ENCODE measurements at regions of chr2 and their contacts with region 1.

Region 1: DNA sequence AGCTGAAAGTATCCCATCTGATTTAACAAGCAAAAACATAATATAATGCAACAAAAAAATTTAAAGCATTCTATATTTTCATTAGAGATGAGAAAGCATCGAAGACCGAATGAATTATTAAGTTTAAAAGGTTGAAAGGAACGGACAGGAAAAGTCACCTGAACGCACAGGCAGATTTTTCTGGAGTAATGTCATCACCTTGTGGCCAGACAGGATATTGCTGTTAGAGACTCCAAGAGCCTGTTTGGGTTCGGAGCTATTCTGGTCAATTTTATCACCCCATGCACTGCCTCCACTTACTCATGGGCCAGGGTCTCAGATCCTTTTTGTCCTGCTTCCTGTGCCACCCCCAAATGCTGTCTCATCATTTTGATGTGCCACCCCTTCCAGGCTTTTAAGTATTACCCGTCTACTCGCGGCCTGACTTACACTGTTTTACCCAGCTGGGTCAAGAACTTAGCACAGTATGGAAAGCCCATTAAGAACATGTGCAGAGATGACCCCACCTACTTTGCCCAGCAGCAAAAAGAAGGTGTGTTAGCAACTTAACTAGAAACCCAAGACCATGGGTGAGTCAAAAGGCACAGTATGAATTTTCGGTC is 27.3 kb downstream of the GKN2 start:
- DNase-seq: peak; percentile 40 to 67 (median 56)
- ATAC-seq: peak; percentile 77
- H3K4me3 ChIP-seq: no peak overlapping the region
- H3K27ac ChIP-seq: no peak overlapping the region
- H3K4me1 ChIP-seq: peaks cover 7% of the 10 kb centered on the region
- H3K27me3 ChIP-seq: no peaks in the 10 kb centered on the region
- CTCF ChIP-seq: peak; percentile 79 to 96 (median 91)
- POLR2A ChIP-seq: no peak

Region 2: GRCh38 chr2:67782443-67782842 is 1143.0 kb before region 1 on chr2:
- intact Hi-C with region 1: no loop called
- DNase-seq: peak in 1 of 4 donors; percentile 42
- ATAC-seq: peak; percentile 59
- H3K4me3 ChIP-seq: no peak overlapping the region
- H3K27ac ChIP-seq: no peak overlapping the region
- H3K4me1 ChIP-seq: no peaks in the 10 kb centered on the region
- H3K27me3 ChIP-seq: no peaks in the 10 kb centered on the region
- CTCF ChIP-seq: no peak
- POLR2A ChIP-seq: no peak

Region 3: GRCh38 chr2:68467077-68467960 is 458.1 kb before region 1 on chr2 and contains the starts of genes APLF and FBXO48:
- intact Hi-C with region 1: loop called (anchors 10 kb)
- DNase-seq: peak; percentile 98 to 99 (median 98)
- ATAC-seq: peak; percentile 97
- H3K4me3 ChIP-seq: peak within 1 kb of the TSS; percentile 74 to 90
- H3K27ac ChIP-seq: peak within 1 kb of the TSS; percentile 64 to 89 (median 84)
- H3K4me1 ChIP-seq: peaks cover 16% of the 10 kb centered on the region
- H3K27me3 ChIP-seq: no peaks in the 10 kb centered on the region
- CTCF ChIP-seq: no peak
- POLR2A ChIP-seq: peak; percentile 68 to 84 (median 79)
- total RNA-seq, gene APLF: 3.9 to 4.0 TPM
- total RNA-seq, gene FBXO48: 0.78 to 3.0 TPM

Region 4: GRCh38 chr2:68751397-68752339 is 173.7 kb before region 1 on chr2:
- intact Hi-C with region 1: loop called (anchors 5 kb)
- DNase-seq: peak; percentile 91 to 94 (median 92)
- ATAC-seq: peak; percentile 96
- H3K4me3 ChIP-seq: no peak overlapping the region
- H3K27ac ChIP-seq: no peak overlapping the region
- H3K4me1 ChIP-seq: peaks cover 4% of the 10 kb centered on the region
- H3K27me3 ChIP-seq: no peaks in the 10 kb centered on the region
- CTCF ChIP-seq: peak; percentile 89 to 95 (median 93)
- POLR2A ChIP-seq: no peak

Measured in body of pancreas (tissue), 4 donors.